Activated CD4-positive, alpha-beta memory T cell treated with anti-CD3 and anti-CD28 coated beads, Interleukin-2, amount 10 ng/mL, durations not matched to agents 7 days and 5 days (primary cell): ENCODE measurements at regions of chr1 and their contacts with region 1.

Region 1: DNA sequence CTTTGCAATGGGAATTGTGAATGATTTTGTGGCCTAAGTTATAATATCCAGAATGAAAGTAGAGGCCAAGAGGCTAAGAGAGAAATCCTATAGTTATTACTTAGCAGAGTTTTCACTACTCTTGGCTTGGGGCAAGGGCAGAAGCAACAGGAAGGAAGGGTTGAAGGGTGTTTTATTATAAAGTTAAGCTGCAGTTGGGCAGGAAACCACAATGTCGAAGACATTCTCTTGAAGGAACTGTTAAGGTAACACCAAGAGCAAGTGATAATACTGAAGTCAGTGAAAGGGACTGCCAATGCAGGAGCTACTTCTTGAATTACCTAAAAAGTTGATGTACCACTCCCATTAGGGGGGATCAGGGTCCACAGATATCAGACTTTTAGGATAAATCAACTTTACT is 8.3 kb downstream of the XCL2 start:
- DNase-seq: peak; percentile 37
- H3K4me3 Mint-ChIP-seq: peak overlapping the region; percentile 54
- H3K27ac Mint-ChIP-seq: peak overlapping the region; percentile 83
- H3K4me1 Mint-ChIP-seq: peaks cover 48% of the 10 kb centered on the region
- H3K27me3 Mint-ChIP-seq: peaks cover 4% of the 10 kb centered on the region

Region 2: GRCh38 chr1:168466092-168466713 is 69.3 kb before region 1 on chr1:
- CTCF ChIA-PET with region 1: interaction called, 3 read pairs
- POLR2A ChIA-PET with region 1: interaction called, 12 read pairs
- DNase-seq: peak; percentile 44
- H3K4me3 Mint-ChIP-seq: no peak overlapping the region
- H3K27ac Mint-ChIP-seq: peak overlapping the region; percentile 82
- H3K4me1 Mint-ChIP-seq: peaks cover 62% of the 10 kb centered on the region
- H3K27me3 Mint-ChIP-seq: peaks cover 6% of the 10 kb centered on the region

Region 3: GRCh38 chr1:168504064-168504837 is 31.3 kb before region 1 on chr1:
- CTCF ChIA-PET with region 1: no interaction called
- POLR2A ChIA-PET with region 1: no interaction called
- DNase-seq: peak; percentile 43
- H3K4me3 Mint-ChIP-seq: no peak overlapping the region
- H3K27ac Mint-ChIP-seq: peak overlapping the region; percentile 0
- H3K4me1 Mint-ChIP-seq: peaks cover 59% of the 10 kb centered on the region
- H3K27me3 Mint-ChIP-seq: peaks cover 3% of the 10 kb centered on the region

Region 4: DNA sequence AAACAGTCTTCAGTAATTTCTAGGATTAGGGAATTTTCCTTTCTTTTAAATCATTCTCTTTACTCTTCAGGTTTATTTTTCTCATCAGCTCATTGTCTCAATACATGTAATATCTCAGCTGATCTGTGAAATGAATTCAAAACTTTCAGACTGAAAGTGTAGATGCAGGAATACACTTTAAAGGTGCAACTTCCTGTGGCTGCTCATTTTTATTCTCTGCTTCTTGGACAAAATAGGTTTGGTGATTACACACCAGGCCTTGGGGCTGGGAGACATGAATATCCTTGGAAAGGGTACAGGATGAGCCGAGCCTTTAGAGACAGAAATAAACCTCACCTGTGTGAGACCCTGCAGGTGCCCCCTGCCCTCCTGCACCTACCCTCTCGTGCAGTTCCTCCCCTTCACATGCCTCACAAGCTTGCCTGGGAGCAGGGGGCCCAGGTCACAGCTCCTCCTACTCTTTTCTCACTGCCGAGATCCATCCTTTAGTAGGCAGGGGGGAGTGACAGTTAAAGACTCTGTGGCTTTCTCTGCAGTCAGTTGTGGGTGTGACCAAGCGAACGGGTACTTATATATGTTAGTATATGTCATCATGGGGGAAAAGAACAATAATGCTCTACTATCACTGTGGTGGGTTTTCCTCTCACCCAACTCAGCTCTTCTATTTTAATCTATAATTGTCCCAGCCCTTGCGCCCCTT is 15.3 kb before region 1 on chr1:
- CTCF ChIA-PET with region 1: interaction called, 7 read pairs
- POLR2A ChIA-PET with region 1: interaction called, 31 read pairs
- DNase-seq: peak; percentile 59
- H3K4me3 Mint-ChIP-seq: peak overlapping the region; percentile 55
- H3K27ac Mint-ChIP-seq: peak overlapping the region; percentile 85
- H3K4me1 Mint-ChIP-seq: peaks cover 51% of the 10 kb centered on the region
- H3K27me3 Mint-ChIP-seq: no peaks in the 10 kb centered on the region